GM10248 (cell line): ENCODE measurements at regions of chr5 and their contacts with region 1.

Region 1: DNA sequence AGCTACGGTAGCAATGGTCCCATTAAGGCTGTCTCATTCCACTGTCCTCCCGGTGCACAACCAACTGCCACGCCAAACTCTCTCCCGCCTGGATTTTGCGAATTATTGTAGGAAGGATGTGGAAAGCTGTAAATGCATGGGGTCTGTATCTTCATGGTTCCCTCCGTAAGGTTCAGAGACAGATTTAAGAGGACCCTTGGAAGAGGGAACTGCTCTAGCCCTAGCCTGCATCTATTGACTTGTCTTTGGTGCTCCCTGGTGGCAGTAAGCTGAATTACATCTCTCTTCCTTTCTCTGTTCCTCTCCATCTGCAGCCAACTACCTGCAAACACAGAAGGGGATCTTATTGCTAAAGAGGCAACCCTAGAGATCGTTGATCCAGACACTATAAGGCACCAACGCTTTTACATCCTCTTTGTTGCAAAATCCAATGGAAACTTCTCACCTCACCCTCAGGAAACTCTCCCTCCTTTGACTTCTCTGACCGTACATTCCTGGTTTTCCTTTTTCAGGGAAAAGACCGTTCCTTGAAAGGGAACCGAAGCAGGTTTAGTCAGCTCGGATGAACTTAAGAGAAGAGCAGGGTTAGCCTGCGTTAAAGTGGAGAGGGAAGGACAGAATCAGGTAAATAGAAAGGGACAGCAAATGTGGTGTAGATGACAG is 11.9 kb downstream of the CAPSL start:
- DNase-seq: peak; percentile 61
- CTCF ChIP-seq: peak; percentile 83

Region 2: DNA sequence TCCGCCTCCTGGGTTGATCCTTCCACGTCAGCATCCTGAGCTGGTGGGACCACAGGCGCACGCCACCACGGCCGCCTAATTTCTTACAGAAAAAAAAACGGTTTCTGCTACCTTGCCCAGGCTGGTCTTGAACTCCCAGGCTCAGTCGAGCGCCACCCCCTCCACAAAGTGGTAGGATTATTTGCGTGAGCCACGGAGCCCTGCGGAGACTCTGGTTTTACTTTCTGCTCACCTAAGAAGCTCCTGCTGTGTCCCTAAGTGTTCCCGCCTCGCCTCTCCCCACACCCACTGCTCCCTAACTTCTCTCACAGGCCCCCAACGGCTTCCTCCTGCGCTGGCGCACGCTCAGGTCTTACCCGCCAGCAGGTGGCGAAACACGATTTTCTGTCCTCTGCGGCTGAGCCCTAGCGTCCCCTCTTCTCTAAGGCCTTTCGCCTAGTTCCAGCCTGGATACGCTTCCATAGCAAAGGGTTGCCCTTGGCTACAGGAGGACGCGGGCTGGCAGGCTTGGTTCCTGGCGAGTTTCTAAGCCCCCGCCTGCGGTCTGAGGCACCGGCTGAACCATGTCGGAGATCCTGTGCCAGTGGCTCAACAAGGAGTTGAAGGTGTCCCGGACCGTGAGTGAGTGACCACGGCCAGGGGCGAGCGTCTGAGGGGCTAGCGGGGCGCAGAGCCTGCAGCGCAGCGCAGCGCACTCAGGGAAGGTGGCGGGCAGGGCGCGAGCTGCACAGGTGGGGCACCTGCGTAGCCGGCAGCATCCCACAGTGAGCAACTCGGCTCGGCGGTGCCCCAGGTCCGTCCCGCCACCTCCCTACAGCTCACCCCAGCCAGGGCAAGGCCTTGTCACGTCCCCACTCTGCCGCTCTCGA is 308.9 kb before region 1 on chr5 and contains the start of gene SPEF2:
- CTCF ChIA-PET with region 1: interaction called, 22 read pairs
- POLR2A ChIA-PET with region 1: no interaction called
- DNase-seq: peak; percentile 48
- CTCF ChIP-seq: peak; percentile 61

Region 3: DNA sequence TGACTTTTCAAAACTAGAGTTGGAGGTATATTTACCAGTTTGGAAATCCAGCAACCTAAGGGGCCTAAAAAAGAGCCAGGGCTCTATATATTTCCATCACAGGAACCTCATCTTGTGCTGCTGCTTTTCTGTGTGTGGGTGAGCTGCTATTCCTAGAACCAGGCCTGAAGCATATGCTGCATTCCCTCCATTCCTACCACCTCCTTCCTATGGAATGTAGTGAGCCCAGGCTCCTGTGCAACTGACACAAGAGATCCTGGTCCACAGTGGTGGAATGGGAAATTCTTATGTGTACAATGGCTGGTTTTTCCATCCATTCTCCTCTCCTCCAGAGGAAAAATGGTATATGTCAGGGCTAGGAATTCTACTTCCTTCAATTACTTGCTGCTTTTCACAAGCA is 269.8 kb before region 1 on chr5:
- CTCF ChIA-PET with region 1: interaction called, 87 read pairs
- POLR2A ChIA-PET with region 1: no interaction called
- DNase-seq: no peak
- CTCF ChIP-seq: no peak

Region 4: DNA sequence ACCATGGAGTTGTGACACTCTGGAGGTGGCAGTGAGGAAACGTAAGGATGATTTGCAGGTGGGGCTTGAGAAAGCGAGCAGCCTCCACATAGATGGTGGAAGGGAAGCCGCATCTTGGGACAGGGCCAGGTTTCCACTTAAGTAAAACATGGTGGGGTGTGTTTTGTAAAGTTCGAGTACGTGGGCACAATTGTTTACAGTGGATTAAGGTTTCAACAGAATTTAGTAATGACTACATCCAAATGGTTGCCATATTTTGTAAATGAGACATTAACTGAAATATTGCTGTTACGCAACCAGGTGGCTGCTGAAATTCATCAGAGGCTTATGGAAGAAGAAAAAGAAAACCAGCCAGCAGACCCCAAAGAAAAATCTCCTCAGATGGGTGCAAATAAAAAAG is 155.2 kb before region 1 on chr5:
- CTCF ChIA-PET with region 1: interaction called, 342 read pairs
- POLR2A ChIA-PET with region 1: no interaction called
- DNase-seq: no peak
- CTCF ChIP-seq: no peak

Region 5: GRCh38 chr5:35822511-35822910 is 104.0 kb before region 1 on chr5:
- CTCF ChIA-PET with region 1: interaction called, 12 read pairs
- POLR2A ChIA-PET with region 1: no interaction called
- DNase-seq: no peak
- CTCF ChIP-seq: no peak

Region 6: GRCh38 chr5:35842856-35843255 is 83.7 kb before region 1 on chr5:
- CTCF ChIA-PET with region 1: no interaction called
- POLR2A ChIA-PET with region 1: no interaction called
- DNase-seq: no peak
- CTCF ChIP-seq: no peak

Region 7: GRCh38 chr5:35902046-35902676 is 24.4 kb before region 1 on chr5:
- CTCF ChIA-PET with region 1: interaction called, 44 read pairs
- POLR2A ChIA-PET with region 1: interaction called, 9 read pairs
- DNase-seq: no peak
- CTCF ChIP-seq: no peak

Region 8: GRCh38 chr5:35960328-35960727 is 33.8 kb after region 1 on chr5:
- CTCF ChIA-PET with region 1: no interaction called
- POLR2A ChIA-PET with region 1: no interaction called
- DNase-seq: no peak
- CTCF ChIP-seq: no peak